Heart right ventricle (tissue), 16 donors: ENCODE measurements at regions of chr4 and their contacts with region 1.

Region 1: GRCh38 chr4:45317276-45317675 is 590.9 kb upstream of the GNPDA2 start:
- DNase-seq: no peak
- ATAC-seq: peak; percentile 69 to 98 (median 83)
- H3K4me3 ChIP-seq: no peak overlapping the region
- H3K27ac ChIP-seq: peak overlapping the region in 5 of 10 donors; percentile 2 to 48 (median 37)
- H3K4me1 ChIP-seq: peaks cover 0 to 9% (median 0%) of the 10 kb centered on the region in 9 donors
- H3K27me3 ChIP-seq: no peaks in the 10 kb centered on the region
- CTCF ChIP-seq: no peak

Region 2: DNA sequence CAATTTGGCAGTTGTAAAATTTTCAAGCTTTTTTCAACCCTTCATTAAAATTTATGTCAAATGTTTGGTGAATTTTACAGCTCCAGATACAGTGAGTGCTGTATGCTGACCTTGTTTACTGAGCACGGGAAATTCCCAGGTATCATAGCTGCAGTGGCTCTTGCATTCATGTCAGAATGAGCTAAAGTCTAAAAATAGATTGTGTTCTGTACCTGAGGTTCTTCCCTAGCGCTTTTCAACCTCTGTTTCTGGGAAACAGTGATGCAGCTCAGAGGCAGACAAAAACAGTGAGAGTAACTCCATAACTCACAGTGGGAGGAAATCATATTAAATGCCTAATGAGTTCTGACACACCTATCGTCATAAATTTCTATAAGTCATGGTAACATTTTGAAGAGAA is 197.1 kb before region 1 on chr4:
- intact Hi-C with region 1: loop called in 1 of 10 experiments (anchors 10 kb)
- DNase-seq: peak in 1 of 2 donors; percentile 6
- ATAC-seq: peak; percentile 34 to 98 (median 96)
- H3K4me3 ChIP-seq: no peak overlapping the region
- H3K27ac ChIP-seq: peak overlapping the region in 7 of 10 donors; percentile 2 to 59 (median 43)
- H3K4me1 ChIP-seq: peaks cover 0 to 9% (median 0%) of the 10 kb centered on the region in 9 donors
- H3K27me3 ChIP-seq: no peaks in the 10 kb centered on the region
- CTCF ChIP-seq: no peak

Region 3: DNA sequence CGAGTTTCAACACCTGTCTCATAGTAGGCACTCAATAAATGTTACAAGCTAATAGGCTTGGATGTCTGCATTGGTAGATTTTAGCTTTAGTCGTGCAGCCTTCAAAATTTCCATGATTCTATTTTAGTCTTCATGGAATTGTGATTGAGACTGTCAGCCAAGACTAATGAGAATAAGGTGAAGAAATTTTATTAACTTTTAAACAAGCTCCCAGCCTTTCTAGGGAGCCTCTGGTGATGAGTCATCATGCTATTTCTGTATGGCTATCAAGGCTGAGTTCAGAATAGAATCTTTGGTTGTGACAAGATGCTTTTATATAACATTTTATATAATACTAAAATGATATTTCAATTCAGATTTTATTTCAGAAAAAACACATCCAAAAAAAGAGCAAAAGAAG is 120.8 kb after region 1 on chr4:
- intact Hi-C with region 1: no loop called
- DNase-seq: peak in 1 of 2 donors; percentile 11
- ATAC-seq: peak in 4 of 8 donors; percentile 43 to 84 (median 63)
- H3K4me3 ChIP-seq: no peak overlapping the region
- H3K27ac ChIP-seq: peak overlapping the region in 5 of 10 donors; percentile 49 to 62 (median 57)
- H3K4me1 ChIP-seq: peaks cover 0 to 6% (median 0%) of the 10 kb centered on the region in 9 donors
- H3K27me3 ChIP-seq: no peaks in the 10 kb centered on the region
- CTCF ChIP-seq: no peak